A673 (cell line): ENCODE measurements at regions of chr4 and their contacts with region 1.

Region 1: GRCh38 chr4:82373816-82374625 is at the start of gene HNRNPD:
- DNase-seq: peak; percentile 98
- H3K4me3 ChIP-seq: peak within 1 kb of the TSS; percentile 86
- H3K27ac ChIP-seq: peak within 1 kb of the TSS; percentile 99
- H3K4me1 ChIP-seq: peaks cover 11% of the 10 kb centered on the region
- H3K27me3 ChIP-seq: no peaks in the 10 kb centered on the region
- CTCF ChIP-seq: no peak
- total RNA-seq, gene HNRNPD: 313 and 316 TPM in 2 replicates

Region 2: GRCh38 chr4:81505726-81506125 is 868.3 kb before region 1 on chr4:
- CTCF ChIA-PET with region 1: no interaction called
- POLR2A ChIA-PET with region 1: interaction called, 14 read pairs
- intact Hi-C with region 1: no loop called
- DNase-seq: no peak
- H3K4me3 ChIP-seq: no peak overlapping the region
- H3K27ac ChIP-seq: no peak overlapping the region
- H3K4me1 ChIP-seq: no peaks in the 10 kb centered on the region
- H3K27me3 ChIP-seq: no peaks in the 10 kb centered on the region
- CTCF ChIP-seq: no peak

Region 3: DNA sequence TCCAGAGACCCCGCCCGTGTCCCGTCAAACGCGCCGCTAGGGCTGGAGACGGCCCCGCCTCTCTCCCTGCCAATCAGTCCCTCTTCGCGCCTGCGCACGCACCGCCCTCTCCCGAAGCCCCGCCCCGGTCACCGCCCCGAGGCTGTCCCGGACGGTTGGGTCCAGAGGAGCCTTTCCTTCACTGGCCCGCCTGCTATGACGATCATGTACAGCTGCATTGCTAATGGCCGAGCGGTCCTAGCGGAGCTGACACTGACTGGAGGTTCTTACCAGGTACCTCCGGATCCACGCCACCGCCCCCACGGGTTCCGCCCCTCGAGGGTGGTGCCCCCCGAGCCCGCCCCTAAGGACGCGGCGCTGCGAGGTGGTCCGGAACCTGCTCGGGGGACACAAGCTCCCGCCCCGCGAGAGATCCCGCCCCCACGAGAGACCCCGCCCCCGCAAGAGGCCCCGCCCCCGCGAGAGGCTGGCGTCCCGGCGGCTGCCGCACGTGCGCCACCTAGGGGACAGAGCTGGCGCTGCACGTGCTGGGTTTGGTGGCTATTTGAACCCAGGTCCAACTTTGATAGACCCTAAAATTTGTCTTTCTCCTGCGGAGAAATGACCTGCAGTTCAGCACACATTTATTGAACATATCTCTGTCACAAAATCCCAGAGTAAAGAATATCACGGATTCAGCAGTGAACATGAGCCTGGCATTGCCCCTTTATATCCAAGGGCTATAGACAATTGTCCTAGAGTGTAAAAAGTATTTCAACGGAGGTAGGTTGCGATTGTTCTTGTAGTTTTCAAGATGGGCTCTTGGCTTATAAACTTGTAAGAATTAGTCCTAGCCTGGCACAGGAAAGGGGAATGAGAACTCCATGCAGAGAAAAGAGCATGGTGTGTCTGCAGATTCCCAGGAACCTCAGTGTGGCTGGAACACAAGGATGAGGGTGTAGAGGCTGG is 88.9 kb before region 1 on chr4:
- CTCF ChIA-PET with region 1: no interaction called
- POLR2A ChIA-PET with region 1: interaction called, 13 read pairs
- intact Hi-C with region 1: no loop called
- DNase-seq: peak; percentile 96
- H3K4me3 ChIP-seq: peak overlapping the region; percentile 42
- H3K27ac ChIP-seq: no peak overlapping the region
- H3K4me1 ChIP-seq: no peaks in the 10 kb centered on the region
- H3K27me3 ChIP-seq: no peaks in the 10 kb centered on the region
- CTCF ChIP-seq: peak; percentile 76

Region 4: DNA sequence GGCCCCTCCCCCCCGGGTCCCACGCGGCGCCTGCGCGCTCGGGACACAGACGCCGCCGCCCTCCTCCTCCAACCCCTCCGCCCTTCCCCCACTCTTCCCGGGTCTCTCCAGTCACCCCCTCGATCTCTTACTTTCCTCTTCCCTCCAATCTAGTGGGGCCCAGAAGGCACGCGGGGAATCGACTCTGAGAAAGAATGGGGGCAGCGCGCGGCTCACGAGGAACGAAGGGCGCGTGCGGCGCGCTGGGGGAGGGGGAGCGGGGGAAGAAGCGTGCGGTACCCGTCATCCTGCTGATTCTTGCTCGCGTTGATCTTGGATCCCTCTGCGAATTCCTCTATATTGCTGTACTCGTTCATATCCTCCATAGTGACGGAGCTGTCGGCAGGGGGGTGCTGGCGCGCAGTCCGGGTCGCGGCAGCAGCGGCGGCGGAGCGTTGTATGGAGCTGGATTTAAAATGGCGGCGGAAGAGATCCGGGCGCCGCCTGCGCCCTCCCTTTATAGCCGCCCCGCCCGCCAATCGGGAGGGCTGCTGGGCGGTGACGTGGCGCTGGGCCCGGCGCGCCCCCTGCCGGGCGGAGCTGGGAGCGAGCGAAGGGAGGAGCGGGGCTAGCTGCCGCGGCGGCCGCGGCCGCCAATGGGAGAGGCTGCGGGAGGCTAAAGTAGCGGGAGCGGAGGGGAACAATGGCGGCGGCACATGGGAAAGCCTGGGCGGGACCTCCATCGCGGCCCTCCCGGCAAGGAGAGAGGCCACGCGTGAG is 55.1 kb after region 1 on chr4:
- CTCF ChIA-PET with region 1: no interaction called
- POLR2A ChIA-PET with region 1: interaction called, 3 read pairs
- intact Hi-C with region 1: loop called (anchors 1 kb)
- DNase-seq: peak; percentile 89
- H3K4me3 ChIP-seq: peak overlapping the region; percentile 88
- H3K27ac ChIP-seq: peak overlapping the region; percentile 99
- H3K4me1 ChIP-seq: no peaks in the 10 kb centered on the region
- H3K27me3 ChIP-seq: no peaks in the 10 kb centered on the region
- CTCF ChIP-seq: peak; percentile 58

Region 5: DNA sequence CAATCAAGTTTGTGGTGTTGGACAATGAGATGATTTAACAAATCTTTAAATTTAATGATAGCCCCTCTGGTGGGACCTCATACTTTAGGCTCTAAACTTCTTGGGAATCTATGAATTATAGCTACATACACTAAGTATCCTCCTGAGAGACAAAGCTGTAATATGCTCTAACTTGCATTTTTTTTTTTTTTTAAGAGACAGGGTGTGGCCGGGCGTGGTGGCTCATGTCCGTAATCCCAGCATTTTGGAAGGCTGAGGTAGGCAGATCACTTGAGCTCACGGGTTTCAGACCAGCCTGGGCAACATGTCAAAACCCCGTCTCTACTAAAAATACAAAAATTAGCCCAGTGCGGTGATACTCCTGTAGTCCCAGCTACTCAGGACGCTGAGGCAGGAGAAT is 933.9 kb after region 1 on chr4:
- CTCF ChIA-PET with region 1: no interaction called
- POLR2A ChIA-PET with region 1: interaction called, 12 read pairs
- intact Hi-C with region 1: no loop called
- DNase-seq: no peak
- H3K4me3 ChIP-seq: no peak overlapping the region
- H3K27ac ChIP-seq: no peak overlapping the region
- H3K4me1 ChIP-seq: no peaks in the 10 kb centered on the region
- H3K27me3 ChIP-seq: no peaks in the 10 kb centered on the region
- CTCF ChIP-seq: no peak